Aorta (tissue), 5 donors: ENCODE measurements at regions of chr6 and their contacts with region 1.

Region 1: DNA sequence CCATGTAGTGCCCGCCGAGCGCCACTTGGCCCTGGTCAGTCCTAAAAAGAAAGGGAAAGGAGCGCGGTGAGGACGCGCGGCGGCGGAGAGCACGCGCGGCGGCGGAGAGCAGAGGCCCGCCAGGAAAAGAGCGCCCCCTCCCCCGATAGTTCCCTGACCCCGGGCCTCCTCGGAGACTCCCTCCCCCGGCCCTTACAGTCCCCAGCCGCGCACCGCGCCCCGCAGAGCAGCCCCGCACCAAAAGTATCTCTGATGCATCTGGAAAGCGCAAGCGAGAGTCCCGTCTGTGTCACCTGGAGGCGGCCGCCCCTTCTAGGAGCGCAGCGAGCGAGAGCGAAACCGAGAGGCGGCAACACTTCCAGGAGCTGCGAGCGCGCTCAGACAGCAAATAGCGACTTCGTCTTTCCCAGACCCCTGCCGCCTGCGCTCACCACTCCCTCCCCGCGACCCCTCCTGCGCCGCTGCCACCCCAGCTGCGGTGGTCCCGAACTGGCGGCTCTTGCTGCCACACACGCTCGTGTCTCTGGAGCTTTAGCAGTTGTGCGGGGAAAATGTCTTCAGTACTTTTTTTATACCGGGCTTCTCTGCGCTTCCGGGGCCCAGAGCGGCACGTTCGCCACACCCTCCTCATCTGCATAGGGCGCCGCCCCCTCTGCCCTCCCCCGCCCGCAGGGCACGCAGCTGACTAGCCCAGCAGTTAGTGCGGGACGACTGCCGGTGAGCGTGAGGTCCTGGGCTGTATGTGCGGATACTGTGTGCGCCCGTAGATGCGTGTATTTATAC is at the start of gene TENT5A:
- DNase-seq: peak; percentile 96 to 97
- ATAC-seq: peak; percentile 94
- H3K4me3 ChIP-seq: peak within 1 kb of the TSS; percentile 84 to 100
- H3K27ac ChIP-seq: peak within 1 kb of the TSS; percentile 71 to 99
- H3K4me1 ChIP-seq: peaks cover 0 to 2% of the 10 kb centered on the region in 2 donors
- H3K27me3 ChIP-seq: no peaks in the 10 kb centered on the region
- total RNA-seq, gene TENT5A: 25.5 to 26.9 TPM

Region 2: GRCh38 chr6:80214436-80215022 is 1537.8 kb before region 1 on chr6:
- intact Hi-C with region 1: loop called (anchors 2 to 10 kb)
- DNase-seq: no peak
- ATAC-seq: peak; percentile 84
- H3K4me3 ChIP-seq: no peak overlapping the region
- H3K27ac ChIP-seq: no peak overlapping the region
- H3K4me1 ChIP-seq: peaks cover 2 to 3% of the 10 kb centered on the region in 2 donors
- H3K27me3 ChIP-seq: no peaks in the 10 kb centered on the region

Region 3: GRCh38 chr6:81172056-81172740 is 580.1 kb before region 1 on chr6:
- intact Hi-C with region 1: loop called in 1 of 2 experiments (anchors 5 kb)
- DNase-seq: peak; percentile 62 to 69
- ATAC-seq: peak; percentile 94
- H3K4me3 ChIP-seq: no peak overlapping the region
- H3K27ac ChIP-seq: peak overlapping the region in 1 of 2 donors; percentile 84
- H3K4me1 ChIP-seq: peaks cover 0 to 5% of the 10 kb centered on the region in 2 donors
- H3K27me3 ChIP-seq: no peaks in the 10 kb centered on the region

Region 4: DNA sequence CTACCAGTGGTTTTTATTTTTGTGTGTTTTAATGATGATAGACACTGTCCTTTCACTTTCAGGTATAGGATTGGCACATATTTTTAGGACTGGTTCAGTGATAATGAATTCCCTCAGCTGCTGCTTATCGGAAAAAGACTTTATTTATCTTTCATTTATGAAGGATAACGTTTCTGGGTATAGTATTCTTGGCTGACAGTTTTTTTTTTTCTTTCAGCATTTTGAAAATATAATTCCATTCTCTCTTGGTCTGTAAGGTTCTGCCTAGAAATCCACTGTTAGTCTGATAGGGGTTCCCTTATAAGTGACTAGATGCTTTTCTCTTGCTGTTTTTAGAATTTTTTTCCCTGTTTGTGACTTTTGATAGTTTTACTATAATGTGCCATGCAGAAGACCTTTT is 312.9 kb before region 1 on chr6:
- intact Hi-C with region 1: no loop called
- DNase-seq: no peak
- ATAC-seq: no peak
- H3K4me3 ChIP-seq: no peak overlapping the region
- H3K27ac ChIP-seq: no peak overlapping the region
- H3K4me1 ChIP-seq: no peaks in the 10 kb centered on the region
- H3K27me3 ChIP-seq: no peaks in the 10 kb centered on the region

Region 5: DNA sequence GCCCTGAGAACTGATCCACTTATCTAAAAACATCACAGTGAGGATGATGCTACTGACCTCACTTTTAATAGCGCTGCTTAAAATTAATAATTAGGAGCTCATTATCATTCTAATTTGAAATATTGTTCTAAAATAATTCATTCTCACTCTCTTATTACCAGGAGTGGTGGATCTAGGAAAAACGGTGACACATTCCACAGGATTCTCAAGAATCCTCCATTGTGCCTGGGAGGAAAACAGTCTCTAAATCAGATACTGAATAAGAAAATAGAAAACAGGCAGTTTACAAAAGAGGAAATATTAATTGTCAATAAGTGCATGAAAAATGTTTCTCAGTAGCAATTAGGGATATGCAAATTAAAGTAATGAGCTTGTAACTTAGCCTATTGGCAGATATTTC is 187.3 kb before region 1 on chr6:
- intact Hi-C with region 1: loop called in 1 of 2 experiments (anchors 5 kb)
- DNase-seq: no peak
- ATAC-seq: no peak
- H3K4me3 ChIP-seq: no peak overlapping the region
- H3K27ac ChIP-seq: no peak overlapping the region
- H3K4me1 ChIP-seq: no peaks in the 10 kb centered on the region
- H3K27me3 ChIP-seq: no peaks in the 10 kb centered on the region

Region 6: GRCh38 chr6:81900616-81901015 is 148.3 kb after region 1 on chr6:
- intact Hi-C with region 1: loop called in 1 of 2 experiments (anchors 2 kb)
- DNase-seq: no peak
- ATAC-seq: no peak
- H3K4me3 ChIP-seq: no peak overlapping the region
- H3K27ac ChIP-seq: no peak overlapping the region
- H3K4me1 ChIP-seq: peaks cover 7 to 12% of the 10 kb centered on the region in 2 donors
- H3K27me3 ChIP-seq: no peaks in the 10 kb centered on the region

Region 7: GRCh38 chr6:81997091-81997926 is 245.0 kb after region 1 on chr6:
- intact Hi-C with region 1: loop called in 1 of 2 experiments (anchors 5 kb)
- DNase-seq: no peak
- ATAC-seq: peak; percentile 71
- H3K4me3 ChIP-seq: no peak overlapping the region
- H3K27ac ChIP-seq: peak overlapping the region in 1 of 2 donors; percentile 57
- H3K4me1 ChIP-seq: peaks cover 2 to 6% of the 10 kb centered on the region in 2 donors
- H3K27me3 ChIP-seq: no peaks in the 10 kb centered on the region